ENCODE measurements at regions of chr20 and their contacts with region 1.

Region 1: DNA sequence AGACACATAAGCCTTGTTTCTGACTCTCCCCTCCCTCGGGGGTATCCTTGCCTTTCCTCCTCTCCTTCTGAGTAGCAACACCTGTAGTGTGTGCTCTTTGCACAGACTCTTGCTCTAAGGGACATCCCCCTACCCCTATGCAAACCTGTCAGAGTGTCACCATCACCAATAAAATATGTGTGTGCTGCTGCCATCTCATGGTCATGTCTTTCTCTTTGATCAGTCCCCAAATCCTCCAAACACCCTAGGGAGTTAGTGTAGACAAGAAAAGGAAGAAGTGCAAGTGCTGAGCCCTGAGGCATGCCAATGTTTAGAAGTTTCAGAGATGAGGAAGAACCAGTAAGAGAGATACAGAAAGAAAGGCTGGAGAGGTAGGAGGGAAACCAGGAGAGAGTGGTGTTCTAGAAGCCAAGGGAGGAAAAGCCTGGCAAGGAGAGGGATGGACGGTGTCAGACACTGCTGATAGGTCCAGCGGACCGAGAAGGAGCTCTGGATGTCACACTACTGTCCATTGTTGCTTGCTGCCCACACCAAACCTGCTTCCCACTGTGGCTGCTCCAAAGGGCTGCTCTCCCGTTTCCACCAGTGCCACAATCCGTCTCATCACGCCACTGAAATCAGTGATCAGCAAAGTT is 16.4 kb downstream of the TRMT6 start:
- DNase-seq: peak; percentile 56
- H3K4me3 Mint-ChIP-seq: no peak overlapping the region
- H3K27ac Mint-ChIP-seq: no peak overlapping the region
- H3K4me1 Mint-ChIP-seq: peaks cover 6% of the 10 kb centered on the region
- H3K27me3 Mint-ChIP-seq: no peaks in the 10 kb centered on the region

Region 2: GRCh38 chr20:5674176-5674660 is 259.7 kb before region 1 on chr20:
- CTCF ChIA-PET with region 1: no interaction called
- intact Hi-C with region 1: no loop called
- DNase-seq: peak; percentile 15
- H3K4me3 Mint-ChIP-seq: no peak overlapping the region
- H3K27ac Mint-ChIP-seq: no peak overlapping the region
- H3K4me1 Mint-ChIP-seq: peaks cover 7% of the 10 kb centered on the region
- H3K27me3 Mint-ChIP-seq: no peaks in the 10 kb centered on the region

Region 3: DNA sequence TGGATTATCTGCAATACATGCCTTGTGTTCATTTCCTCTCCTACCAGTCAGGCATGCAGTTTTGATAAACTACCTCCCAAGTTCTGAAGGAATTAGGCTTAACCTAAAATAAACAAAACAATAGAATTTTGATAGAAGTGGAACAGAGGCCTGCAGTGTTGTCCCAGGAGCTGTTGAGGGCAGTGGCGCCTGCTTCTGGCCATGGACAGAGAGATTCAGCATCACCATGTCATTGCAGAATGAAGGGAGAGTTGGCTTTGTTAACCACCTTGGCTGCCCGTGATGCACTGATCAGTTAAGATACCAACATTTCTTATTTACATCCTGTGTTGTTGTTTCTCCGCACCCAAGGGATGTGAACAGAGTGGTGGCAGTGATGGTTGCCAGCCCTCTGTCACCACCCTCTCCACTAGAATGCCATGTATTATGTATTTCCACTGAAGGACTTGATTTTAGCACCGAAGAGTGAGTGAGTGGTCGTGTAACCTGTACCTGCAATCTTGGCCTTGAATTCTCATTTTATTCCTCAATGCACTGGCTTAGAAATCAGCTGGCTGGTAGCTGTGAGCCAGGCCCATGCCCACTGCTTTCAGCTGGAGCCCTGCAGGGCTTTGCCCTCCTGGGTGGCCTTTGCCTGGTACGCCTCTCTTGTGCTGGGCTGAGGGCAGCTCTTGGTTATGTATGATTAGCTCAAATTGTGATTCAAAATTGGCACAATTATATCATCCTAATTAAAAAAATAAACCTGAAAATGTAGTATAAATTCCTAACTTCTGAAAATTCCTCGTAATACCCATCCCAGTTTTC is 127.3 kb before region 1 on chr20:
- CTCF ChIA-PET with region 1: interaction called, 3 read pairs
- intact Hi-C with region 1: loop called (anchors 1 kb)
- DNase-seq: peak; percentile 18
- H3K4me3 Mint-ChIP-seq: no peak overlapping the region
- H3K27ac Mint-ChIP-seq: no peak overlapping the region
- H3K4me1 Mint-ChIP-seq: peaks cover 20% of the 10 kb centered on the region
- H3K27me3 Mint-ChIP-seq: no peaks in the 10 kb centered on the region